ENCODE measurements at regions of chr15 and their contacts with region 1.

Region 1: GRCh38 chr15:43285609-43286037 is 18.9 kb upstream of the TGM5 start:
- DNase-seq: peak; percentile 77
- H3K4me3 Mint-ChIP-seq: no peak overlapping the region
- H3K27ac Mint-ChIP-seq: no peak overlapping the region
- H3K4me1 Mint-ChIP-seq: peaks cover 5% of the 10 kb centered on the region
- H3K27me3 Mint-ChIP-seq: peaks cover 22% of the 10 kb centered on the region
- CTCF ChIP-seq: peak; percentile 88

Region 2: GRCh38 chr15:42528970-42529369 is 756.7 kb before region 1 on chr15:
- CTCF ChIA-PET with region 1: no interaction called
- POLR2A ChIA-PET with region 1: no interaction called
- intact Hi-C with region 1: no loop called
- DNase-seq: no peak
- H3K4me3 Mint-ChIP-seq: no peak overlapping the region
- H3K27ac Mint-ChIP-seq: no peak overlapping the region
- H3K4me1 Mint-ChIP-seq: no peaks in the 10 kb centered on the region
- H3K27me3 Mint-ChIP-seq: no peaks in the 10 kb centered on the region
- CTCF ChIP-seq: no peak

Region 3: GRCh38 chr15:43185157-43186017 is 100.2 kb before region 1 on chr15 and contains the start of gene CCNDBP1:
- CTCF ChIA-PET with region 1: interaction called, 18 read pairs
- POLR2A ChIA-PET with region 1: interaction called, 4 read pairs
- intact Hi-C with region 1: loop called (anchors 1 kb)
- DNase-seq: peak; percentile 88
- H3K4me3 Mint-ChIP-seq: peak within 1 kb of the TSS; percentile 93
- H3K27ac Mint-ChIP-seq: peak within 1 kb of the TSS; percentile 93
- H3K4me1 Mint-ChIP-seq: peaks cover 10% of the 10 kb centered on the region
- H3K27me3 Mint-ChIP-seq: no peaks in the 10 kb centered on the region
- CTCF ChIP-seq: peak; percentile 30
- total RNA-seq, gene CCNDBP1: 45.5 and 50.4 TPM in 2 replicates

Region 4: DNA sequence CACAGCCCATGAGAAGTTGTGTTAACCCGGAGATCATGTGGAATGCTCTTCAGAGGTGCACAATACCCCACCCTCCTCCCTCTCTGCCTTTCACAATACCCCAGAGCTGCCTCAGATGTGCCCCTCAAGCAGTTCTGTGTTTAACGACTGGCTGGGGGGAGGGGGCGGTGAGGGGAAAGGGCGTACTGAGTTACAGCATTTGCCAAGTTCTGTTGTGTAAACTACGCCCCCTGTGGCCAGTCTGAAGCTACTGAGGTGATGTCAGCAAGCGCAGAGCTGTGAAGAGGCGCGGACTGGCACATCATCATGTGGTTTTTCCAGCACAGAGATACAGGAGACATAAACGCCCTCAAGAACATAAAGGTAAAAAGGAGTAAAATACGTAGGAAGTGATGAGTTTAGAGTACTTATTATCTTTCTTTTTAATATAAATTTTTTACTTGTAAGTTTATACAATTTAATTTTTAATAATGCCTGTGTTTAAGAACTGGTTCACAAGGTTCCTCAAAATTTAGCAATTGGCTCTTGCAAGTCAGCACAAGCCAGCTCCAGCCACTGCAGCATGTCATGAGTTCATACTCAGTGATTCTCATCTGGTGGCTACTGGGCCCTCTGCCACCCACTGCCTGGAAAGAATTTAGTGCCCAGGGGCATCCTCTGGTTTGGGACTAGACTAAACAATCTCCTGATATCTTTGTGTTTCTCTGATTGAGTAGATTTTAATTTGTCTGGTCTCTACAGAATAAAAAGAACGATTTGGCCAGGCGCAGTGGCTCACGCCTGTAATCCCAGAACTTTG is 66.5 kb before region 1 on chr15:
- CTCF ChIA-PET with region 1: interaction called, 222 read pairs
- POLR2A ChIA-PET with region 1: interaction called, 7 read pairs
- intact Hi-C with region 1: no loop called
- DNase-seq: peak; percentile 88
- H3K4me3 Mint-ChIP-seq: no peak overlapping the region
- H3K27ac Mint-ChIP-seq: peak overlapping the region; percentile 46
- H3K4me1 Mint-ChIP-seq: peaks cover 6% of the 10 kb centered on the region
- H3K27me3 Mint-ChIP-seq: no peaks in the 10 kb centered on the region
- CTCF ChIP-seq: peak; percentile 35

Region 5: GRCh38 chr15:43230640-43231115 is 54.9 kb before region 1 on chr15:
- CTCF ChIA-PET with region 1: interaction called, 222 read pairs
- POLR2A ChIA-PET with region 1: interaction called, 32 read pairs
- intact Hi-C with region 1: loop called (anchors 1 kb)
- DNase-seq: no peak
- H3K4me3 Mint-ChIP-seq: no peak overlapping the region
- H3K27ac Mint-ChIP-seq: no peak overlapping the region
- H3K4me1 Mint-ChIP-seq: no peaks in the 10 kb centered on the region
- H3K27me3 Mint-ChIP-seq: peaks cover 3% of the 10 kb centered on the region
- CTCF ChIP-seq: no peak

Region 6: GRCh38 chr15:43253431-43254403 is 31.9 kb before region 1 on chr15:
- CTCF ChIA-PET with region 1: interaction called, 15 read pairs
- POLR2A ChIA-PET with region 1: no interaction called
- intact Hi-C with region 1: no loop called
- DNase-seq: peak; percentile 94
- H3K4me3 Mint-ChIP-seq: peak overlapping the region; percentile 9
- H3K27ac Mint-ChIP-seq: peak overlapping the region; percentile 46
- H3K4me1 Mint-ChIP-seq: peaks cover 34% of the 10 kb centered on the region
- H3K27me3 Mint-ChIP-seq: no peaks in the 10 kb centered on the region
- CTCF ChIP-seq: no peak

Region 7: GRCh38 chr15:43302205-43302817 is 16.7 kb after region 1 on chr15:
- CTCF ChIA-PET with region 1: interaction called, 10 read pairs
- POLR2A ChIA-PET with region 1: no interaction called
- intact Hi-C with region 1: no loop called
- DNase-seq: no peak
- H3K4me3 Mint-ChIP-seq: no peak within 1 kb of the TSS
- H3K27ac Mint-ChIP-seq: no peak within 1 kb of the TSS
- H3K4me1 Mint-ChIP-seq: no peaks in the 10 kb centered on the region
- H3K27me3 Mint-ChIP-seq: peaks cover 56% of the 10 kb centered on the region
- CTCF ChIP-seq: no peak

Region 8: DNA sequence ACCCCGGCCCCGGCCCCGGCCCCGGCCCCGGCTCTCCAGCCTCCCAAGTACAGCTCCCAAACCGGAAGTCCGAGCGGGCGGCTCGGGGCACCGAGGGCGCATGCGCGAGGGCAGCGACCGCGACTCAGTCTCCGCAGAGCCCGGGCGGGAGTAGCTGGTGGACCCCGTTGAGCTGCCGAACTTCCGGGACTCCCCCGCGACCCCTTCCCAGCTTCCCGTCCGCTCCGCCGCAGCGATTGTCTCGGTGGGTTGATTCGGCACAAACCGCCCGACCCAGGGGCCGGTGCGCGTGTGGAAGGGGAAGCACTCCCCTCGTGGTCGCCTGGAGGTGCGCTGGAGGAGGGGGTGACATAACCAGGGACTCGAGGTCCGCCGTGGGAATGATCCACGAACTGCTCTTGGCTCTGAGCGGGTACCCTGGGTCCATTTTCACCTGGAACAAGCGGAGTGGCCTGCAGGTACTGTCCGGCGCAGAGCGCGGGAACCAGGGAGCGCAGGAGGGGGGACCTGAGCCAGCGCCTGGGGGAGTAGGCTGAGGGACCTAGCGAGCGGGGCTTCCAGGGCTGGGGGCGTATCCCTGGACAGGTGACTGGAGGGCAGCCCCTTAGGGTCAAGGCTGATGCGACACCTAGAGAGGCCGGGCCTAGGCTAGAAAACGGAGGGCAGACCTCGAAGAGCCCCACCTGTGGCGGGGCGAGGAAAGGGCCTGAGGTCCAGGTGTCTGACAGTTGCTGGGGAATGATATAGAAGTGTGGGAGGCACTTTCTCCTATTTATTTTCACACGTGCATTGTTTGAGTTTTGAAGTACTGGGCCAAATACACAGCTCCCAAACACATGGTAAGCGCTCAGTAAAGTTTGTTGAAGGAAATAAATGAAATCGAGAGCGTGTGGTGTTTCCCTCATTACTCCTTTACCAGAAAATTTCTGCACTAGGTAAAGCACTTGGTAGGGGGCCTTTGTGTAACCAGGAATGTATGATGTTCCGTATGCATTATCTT is 85.7 kb after region 1 on chr15 and contains the starts of genes TUBGCP4 and ZSCAN29:
- CTCF ChIA-PET with region 1: no interaction called
- POLR2A ChIA-PET with region 1: no interaction called
- intact Hi-C with region 1: no loop called
- DNase-seq: peak; percentile 76
- H3K4me3 Mint-ChIP-seq: peak within 1 kb of the TSS; percentile 95
- H3K27ac Mint-ChIP-seq: peak within 1 kb of the TSS; percentile 92
- H3K4me1 Mint-ChIP-seq: peaks cover 44% of the 10 kb centered on the region
- H3K27me3 Mint-ChIP-seq: no peaks in the 10 kb centered on the region
- CTCF ChIP-seq: peak; percentile 44
- total RNA-seq, gene TUBGCP4: 23.3 and 31.4 TPM in 2 replicates
- total RNA-seq, gene ZSCAN29: 38.7 and 38.9 TPM in 2 replicates

Measured in MCF 10A (cell line).